Posterior vena cava (tissue), 2 donors: ENCODE measurements at regions of chr17 and their contacts with region 1.

Region 1: DNA sequence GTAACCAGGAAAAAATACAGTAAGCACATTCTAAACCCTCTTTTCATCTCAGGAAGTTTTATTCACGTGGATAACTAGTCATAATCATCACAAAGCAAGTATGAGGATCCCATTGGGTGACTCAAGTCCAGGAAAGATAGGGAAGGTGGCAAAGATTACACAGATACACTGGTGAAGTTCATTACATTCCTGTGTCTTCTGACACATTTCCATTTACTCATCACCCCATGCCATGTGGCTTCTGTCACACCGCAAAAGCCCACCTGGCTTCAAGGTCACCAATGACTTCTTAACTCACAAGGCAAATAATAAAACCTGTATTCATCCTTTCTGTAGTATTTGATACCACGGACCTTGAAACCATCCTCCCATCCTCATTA is 17.0 kb downstream of the HS3ST3A1 start:
- DNase-seq: no peak

Region 2: DNA sequence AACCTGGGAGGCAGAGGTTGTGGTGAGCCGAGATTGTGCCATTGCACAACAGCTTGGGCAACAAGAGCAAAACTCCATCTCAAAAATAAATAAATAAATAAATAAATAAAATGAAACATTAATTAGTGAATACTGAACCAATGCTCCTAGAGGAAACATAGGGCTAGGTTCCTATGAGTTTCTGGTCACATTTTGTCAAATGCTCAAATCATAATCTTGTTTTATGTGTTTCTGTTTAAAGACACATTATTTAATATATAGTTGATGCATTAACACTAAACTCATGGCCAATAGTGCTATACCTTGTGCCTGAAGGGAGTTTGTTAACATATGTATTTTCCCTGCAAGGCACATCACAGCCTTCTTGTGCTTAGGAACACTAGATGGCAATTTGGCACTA is 49.7 kb before region 1 on chr17:
- intact Hi-C with region 1: loop called in 1 of 2 experiments (anchors 2 kb)
- DNase-seq: no peak

Region 3: GRCh38 chr17:13609936-13610335 is 25.2 kb after region 1 on chr17:
- intact Hi-C with region 1: no loop called
- DNase-seq: no peak

Region 4: GRCh38 chr17:13704333-13704732 is 119.6 kb after region 1 on chr17:
- intact Hi-C with region 1: no loop called
- DNase-seq: no peak